ENCODE measurements at regions of chr16 and their contacts with region 1.

Region 1: GRCh38 chr16:30874821-30875717 is 18.8 kb downstream of the BCL7C start:
- DNase-seq: peak; percentile 83 to 94 (median 92)
- H3K4me3 ChIP-seq: peak overlapping the region; percentile 56 to 99 (median 91)
- H3K27ac ChIP-seq: peak overlapping the region; percentile 28 to 97 (median 90)
- H3K27me3 ChIP-seq: no peaks in the 10 kb centered on the region
- CTCF ChIP-seq: peak in 40 of 56 donors; percentile 4 to 65 (median 26)

Region 2: DNA sequence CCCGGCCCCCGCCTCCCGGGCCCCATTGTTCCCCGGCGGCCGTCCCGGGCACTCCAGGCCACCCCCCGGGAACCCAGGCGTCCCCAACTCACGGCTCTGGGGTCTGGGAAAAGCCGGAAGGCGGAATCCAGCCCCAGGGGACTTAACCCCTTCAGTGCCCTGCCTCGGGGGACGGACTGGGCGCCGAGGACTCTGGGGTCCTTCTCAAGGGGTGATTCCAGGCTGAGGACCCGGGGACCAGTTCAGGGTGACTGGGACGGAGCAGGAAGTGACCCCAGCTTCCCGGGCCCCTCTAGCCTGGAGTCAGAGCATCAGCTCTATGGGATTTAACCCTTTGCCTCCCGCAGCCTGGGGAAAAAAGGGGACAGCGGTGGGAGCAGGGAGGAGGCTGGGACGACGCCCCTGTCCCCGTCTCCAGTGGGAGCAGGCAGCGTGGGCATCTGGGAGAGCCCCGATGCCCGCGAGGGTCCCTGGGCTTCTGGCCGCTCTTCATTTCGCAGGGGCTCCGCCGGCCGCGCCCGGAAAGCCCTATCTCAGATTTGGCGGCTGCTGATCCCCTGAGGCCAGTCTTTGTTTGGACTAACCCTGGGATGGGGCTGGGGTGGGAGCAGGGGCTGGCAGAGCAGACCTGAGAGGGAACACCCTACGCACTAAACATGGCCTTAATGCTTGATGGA is 88.0 kb before region 1 on chr16 and contains the start of gene ZNF629:
- intact Hi-C with region 1: loop called in 1 of 2 experiments (anchors 1 kb)
- DNase-seq: peak; percentile 59 to 84 (median 79)
- H3K4me3 ChIP-seq: peak within 1 kb of the TSS; percentile 62 to 99 (median 92)
- H3K27ac ChIP-seq: peak within 1 kb of the TSS; percentile 42 to 96 (median 86)
- H3K27me3 ChIP-seq: no peaks in the 10 kb centered on the region
- CTCF ChIP-seq: peak in 13 of 56 donors; percentile 2 to 48 (median 17)
- total RNA-seq, gene ZNF629: 11.5 to 20.4 (median 15.6) TPM

Region 3: GRCh38 chr16:30805370-30806169 is 69.5 kb before region 1 on chr16:
- intact Hi-C with region 1: loop called (anchors 1 to 2 kb)
- DNase-seq: peak; percentile 78 to 94 (median 88)
- H3K4me3 ChIP-seq: peak overlapping the region; percentile 63 to 99 (median 88)
- H3K27ac ChIP-seq: peak overlapping the region; percentile 70 to 98 (median 92)
- H3K27me3 ChIP-seq: no peaks in the 10 kb centered on the region
- CTCF ChIP-seq: peak in 47 of 56 donors; percentile 12 to 63 (median 41)

Region 4: GRCh38 chr16:30893744-30894539 is 18.9 kb after region 1 on chr16 and contains the start of gene BCL7C:
- intact Hi-C with region 1: loop called in 1 of 2 experiments (anchors 2 kb)
- DNase-seq: peak; percentile 60 to 89 (median 77)
- H3K4me3 ChIP-seq: peak within 1 kb of the TSS; percentile 55 to 93 (median 80)
- H3K27ac ChIP-seq: peak within 1 kb of the TSS; percentile 66 to 97 (median 91)
- H3K27me3 ChIP-seq: no peaks in the 10 kb centered on the region
- CTCF ChIP-seq: peak in 51 of 56 donors; percentile 18 to 79 (median 55)
- total RNA-seq, gene BCL7C: 8.8 to 28.1 (median 15.6) TPM

Region 5: DNA sequence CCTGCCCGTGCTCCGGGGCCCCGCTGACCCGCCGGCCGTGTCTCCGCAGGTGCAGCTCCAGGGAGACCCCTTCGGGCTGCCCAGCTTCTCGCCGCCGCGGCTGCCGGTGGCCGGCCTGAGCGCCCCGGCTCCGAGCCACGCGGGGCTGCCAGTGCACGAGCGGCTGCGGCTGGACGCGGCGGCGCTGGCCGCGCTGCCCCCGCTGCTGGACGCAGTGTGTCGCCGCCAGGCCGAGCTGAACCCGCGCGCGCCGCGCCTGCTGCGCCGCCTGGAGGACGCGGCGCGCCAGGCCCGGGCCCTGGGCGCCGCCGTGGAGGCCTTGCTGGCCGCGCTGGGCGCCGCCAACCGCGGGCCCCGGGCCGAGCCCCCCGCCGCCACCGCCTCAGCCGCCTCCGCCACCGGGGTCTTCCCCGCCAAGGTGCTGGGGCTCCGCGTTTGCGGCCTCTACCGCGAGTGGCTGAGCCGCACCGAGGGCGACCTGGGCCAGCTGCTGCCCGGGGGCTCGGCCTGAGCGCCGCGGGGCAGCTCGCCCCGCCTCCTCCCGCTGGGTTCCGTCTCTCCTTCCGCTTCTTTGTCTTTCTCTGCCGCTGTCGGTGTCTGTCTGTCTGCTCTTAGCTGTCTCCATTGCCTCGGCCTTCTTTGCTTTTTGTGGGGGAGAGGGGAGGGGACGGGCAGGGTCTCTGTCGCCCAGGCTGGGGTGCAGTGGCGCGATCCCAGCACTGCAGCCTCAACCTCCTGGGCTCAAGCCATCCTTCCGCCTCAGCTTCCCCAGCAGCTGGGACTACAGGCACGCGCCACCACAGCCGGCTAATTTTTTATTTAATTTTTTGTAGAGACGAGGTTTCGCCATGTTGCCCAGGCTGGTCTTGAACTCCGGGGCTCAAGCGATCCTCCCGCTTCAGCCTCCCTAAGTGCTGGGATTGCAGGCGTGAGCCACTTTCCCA is 27.2 kb after region 1 on chr16:
- intact Hi-C with region 1: loop called in 1 of 2 experiments (anchors 1 kb)
- DNase-seq: peak in 5 of 10 donors; percentile 43 to 82 (median 47)
- H3K4me3 ChIP-seq: peak overlapping the region; percentile 47 to 74 (median 63)
- H3K27ac ChIP-seq: peak overlapping the region; percentile 71 to 97 (median 93)
- H3K27me3 ChIP-seq: no peaks in the 10 kb centered on the region
- CTCF ChIP-seq: peak in 17 of 56 donors; percentile 11 to 52 (median 18)

Measured in dorsolateral prefrontal cortex (tissue), 120 donors.